BJ (cell line): ENCODE measurements at regions of chr10 and their contacts with region 1.

Region 1: GRCh38 chr10:11819030-11819429 is 4.1 kb upstream of the PROSER2 start:
- DNase-seq: no peak
- H3K4me3 ChIP-seq: no peak overlapping the region
- H3K27me3 ChIP-seq: no peaks in the 10 kb centered on the region
- CTCF ChIP-seq: no peak

Region 2: GRCh38 chr10:11724938-11725776 is 93.9 kb before region 1 on chr10:
- CTCF ChIA-PET with region 1: no interaction called
- POLR2A ChIA-PET with region 1: no interaction called
- DNase-seq: no peak
- H3K4me3 ChIP-seq: no peak overlapping the region
- H3K27me3 ChIP-seq: peaks cover 5% of the 10 kb centered on the region; the same call in 1 of the 2 replicates
- CTCF ChIP-seq: peak; percentile 81

Region 3: DNA sequence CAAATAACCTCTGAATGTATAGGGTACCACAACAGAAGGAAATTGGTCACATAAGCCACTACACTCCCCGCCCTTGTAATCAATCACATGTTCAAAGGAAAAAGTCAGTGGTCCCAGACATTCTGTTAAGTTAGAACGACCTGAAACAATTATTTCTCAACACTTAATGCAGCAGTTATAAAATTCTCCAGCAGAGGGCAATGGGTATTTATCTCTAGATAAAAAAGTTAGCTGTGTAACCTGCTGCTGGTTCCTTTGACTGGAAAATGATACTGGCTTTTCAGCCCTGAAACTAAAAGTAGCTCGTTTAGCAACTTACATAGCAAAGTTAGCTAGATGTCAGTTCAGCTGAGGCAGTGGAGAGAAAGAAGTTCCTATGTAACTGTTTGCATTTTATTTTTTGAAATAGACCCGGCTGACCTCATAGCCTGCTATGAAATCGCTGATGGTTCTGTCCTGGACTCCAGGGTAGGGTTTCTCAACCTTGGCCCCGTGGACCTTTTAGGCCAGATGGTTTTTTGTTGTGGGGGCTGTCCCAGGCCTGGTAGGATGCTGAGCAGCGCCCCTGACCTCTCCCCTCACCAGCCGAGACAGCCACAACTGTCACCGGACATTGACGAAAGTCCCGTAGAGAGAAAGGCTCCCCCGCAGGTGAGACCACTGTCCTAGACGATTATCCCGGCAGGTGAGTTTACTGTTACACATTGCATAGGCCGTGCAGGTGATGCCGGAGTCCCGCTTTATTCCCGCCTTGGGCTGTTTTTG is 36.1 kb before region 1 on chr10:
- CTCF ChIA-PET with region 1: interaction called, 10 read pairs
- POLR2A ChIA-PET with region 1: no interaction called
- DNase-seq: no peak
- H3K4me3 ChIP-seq: no peak overlapping the region
- H3K27me3 ChIP-seq: peaks cover 2% of the 10 kb centered on the region; the same call in 1 of the 2 replicates
- CTCF ChIP-seq: peak; percentile 71

Region 4: DNA sequence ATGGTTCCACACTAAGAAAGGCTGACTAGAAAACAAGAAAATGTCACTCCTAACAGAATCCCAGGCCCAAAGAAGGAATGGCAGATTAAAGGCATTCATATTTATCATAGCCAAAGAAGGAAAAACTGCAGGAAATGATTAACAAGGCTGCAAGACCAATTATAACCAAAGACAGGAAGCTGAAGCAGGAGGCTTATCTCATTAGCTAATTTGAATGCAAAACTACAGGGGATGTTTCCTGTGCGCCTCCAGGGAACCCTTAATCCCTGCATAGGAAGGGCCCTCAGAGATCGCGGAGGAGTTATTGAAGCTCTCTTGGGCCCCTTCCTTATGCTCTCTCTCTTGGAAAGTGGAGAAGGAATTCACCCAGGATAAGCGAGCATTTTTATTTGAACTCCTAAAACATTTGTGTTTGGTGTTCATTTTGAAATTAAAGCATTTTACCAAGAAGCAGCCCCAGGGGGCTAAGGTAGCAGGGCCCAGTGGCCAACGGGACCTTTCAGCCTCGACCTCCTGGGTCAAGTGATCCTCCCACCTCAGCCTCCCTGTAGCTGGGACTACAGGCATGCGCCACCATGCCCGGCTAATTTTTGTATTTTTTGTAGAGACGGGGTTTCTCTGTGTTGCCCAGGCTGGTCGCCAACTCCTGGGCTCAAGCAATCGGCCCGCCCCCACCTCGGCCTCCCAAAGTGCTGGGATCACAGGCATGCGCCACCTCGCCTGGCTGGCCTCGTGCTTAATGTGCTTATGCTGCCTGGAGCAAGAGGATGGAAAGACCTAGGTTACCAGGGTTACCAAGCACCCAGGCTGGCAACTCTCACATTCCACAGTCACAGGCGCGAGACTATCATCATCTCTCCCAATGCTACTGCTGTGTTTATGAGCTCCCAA is 19.9 kb before region 1 on chr10:
- CTCF ChIA-PET with region 1: interaction called, 11 read pairs
- POLR2A ChIA-PET with region 1: no interaction called
- DNase-seq: no peak
- H3K4me3 ChIP-seq: no peak overlapping the region
- H3K27me3 ChIP-seq: no peaks in the 10 kb centered on the region
- CTCF ChIP-seq: no peak

Region 5: GRCh38 chr10:11913074-11913641 is 94.1 kb after region 1 on chr10:
- CTCF ChIA-PET with region 1: no interaction called
- POLR2A ChIA-PET with region 1: no interaction called
- DNase-seq: no peak
- H3K4me3 ChIP-seq: no peak overlapping the region
- H3K27me3 ChIP-seq: peaks cover 3% of the 10 kb centered on the region; the same call in 1 of the 2 replicates
- CTCF ChIP-seq: no peak